Activated CD8-positive, alpha-beta T cell treated with anti-CD3 and anti-CD28 coated beads for 36 hours (primary cell): ENCODE measurements at regions of chr9 and their contacts with region 1.

Region 1: DNA sequence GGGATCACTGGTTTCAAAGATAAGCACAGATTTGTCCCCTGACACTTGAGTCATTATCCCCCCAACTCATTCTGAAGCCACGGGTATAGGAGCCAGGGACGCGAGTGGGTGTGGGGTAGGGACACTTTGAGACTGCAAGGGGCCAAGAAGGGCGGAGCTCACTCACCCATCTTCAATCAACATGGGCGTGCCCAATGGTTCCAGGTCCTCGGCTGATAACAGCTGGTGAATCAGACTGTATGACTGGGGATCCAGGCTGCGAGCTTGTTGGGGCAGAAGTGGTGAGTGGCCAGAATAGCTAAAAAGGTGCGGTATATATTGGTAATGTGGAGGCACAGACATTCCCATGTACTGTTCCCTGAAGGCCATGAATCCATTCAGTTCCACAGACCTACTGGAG is 30.7 kb upstream of the NR5A1 start:
- DNase-seq: no peak
- ATAC-seq: no peak
- H3K4me3 Mint-ChIP-seq: no peak overlapping the region
- H3K27ac Mint-ChIP-seq: no peak overlapping the region
- H3K4me1 Mint-ChIP-seq: no peaks in the 10 kb centered on the region
- H3K27me3 Mint-ChIP-seq: peaks cover 1% of the 10 kb centered on the region
- CTCF ChIP-seq: no peak

Region 2: DNA sequence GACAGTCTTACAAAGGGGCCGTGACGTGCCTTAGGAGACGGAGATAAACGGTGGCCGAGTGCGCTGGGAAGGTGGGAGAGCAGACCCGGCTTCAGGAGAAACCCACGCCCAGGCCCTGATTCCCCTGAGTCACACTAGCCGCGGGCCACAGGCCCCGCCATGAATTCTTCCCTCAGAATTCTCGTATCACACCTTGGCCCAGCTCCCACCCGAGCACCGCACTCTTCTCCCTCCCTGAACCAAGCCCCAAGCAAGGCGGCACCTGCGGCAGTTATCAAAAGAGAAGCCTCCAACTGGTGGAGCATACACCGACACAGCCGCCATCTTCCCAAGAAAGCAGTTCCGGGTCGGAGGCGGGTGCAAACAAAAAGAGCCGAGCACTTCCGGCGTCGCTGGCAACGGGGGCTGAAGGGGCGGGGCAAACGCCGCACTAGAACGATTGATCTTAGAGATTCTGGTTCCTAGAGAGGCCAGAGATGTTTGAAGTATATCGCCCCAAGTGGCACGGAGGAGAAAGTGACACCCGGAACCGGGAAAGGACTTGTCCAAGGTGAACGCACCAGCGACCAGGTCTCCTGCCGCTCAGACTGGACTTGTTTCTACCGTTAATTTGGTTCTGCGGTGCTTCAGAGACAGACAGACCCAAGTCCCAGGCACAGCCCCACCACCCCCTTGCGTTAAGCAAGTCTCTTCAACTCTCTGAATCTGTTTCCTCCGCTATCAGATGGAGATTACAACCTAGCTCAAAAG is 122.6 kb before region 1 on chr9 and contains the start of gene PSMB7:
- CTCF ChIA-PET with region 1: interaction called, 93 read pairs
- POLR2A ChIA-PET with region 1: no interaction called
- intact Hi-C with region 1: loop called (anchors 2 kb)
- DNase-seq: peak; percentile 99
- ATAC-seq: peak; percentile 95
- H3K4me3 Mint-ChIP-seq: peak within 1 kb of the TSS; percentile 94
- H3K27ac Mint-ChIP-seq: peak within 1 kb of the TSS; percentile 96
- H3K4me1 Mint-ChIP-seq: peaks cover 33% of the 10 kb centered on the region
- H3K27me3 Mint-ChIP-seq: no peaks in the 10 kb centered on the region
- CTCF ChIP-seq: peak; percentile 93
- total RNA-seq, gene PSMB7: 155 to 170 TPM

Region 3: GRCh38 chr9:124473310-124473709 is 64.6 kb before region 1 on chr9:
- CTCF ChIA-PET with region 1: interaction called, 11 read pairs
- POLR2A ChIA-PET with region 1: no interaction called
- intact Hi-C with region 1: no loop called
- DNase-seq: no peak
- ATAC-seq: no peak
- H3K4me3 Mint-ChIP-seq: no peak overlapping the region
- H3K27ac Mint-ChIP-seq: no peak overlapping the region
- H3K4me1 Mint-ChIP-seq: no peaks in the 10 kb centered on the region
- H3K27me3 Mint-ChIP-seq: peaks cover 6% of the 10 kb centered on the region
- CTCF ChIP-seq: no peak

Region 4: GRCh38 chr9:124498499-124499146 is 39.3 kb before region 1 on chr9:
- CTCF ChIA-PET with region 1: interaction called, 10 read pairs
- POLR2A ChIA-PET with region 1: no interaction called
- intact Hi-C with region 1: no loop called
- DNase-seq: no peak
- ATAC-seq: no peak
- H3K4me3 Mint-ChIP-seq: no peak overlapping the region
- H3K27ac Mint-ChIP-seq: no peak overlapping the region
- H3K4me1 Mint-ChIP-seq: peaks cover 40% of the 10 kb centered on the region
- H3K27me3 Mint-ChIP-seq: peaks cover 9% of the 10 kb centered on the region
- CTCF ChIP-seq: no peak

Region 5: GRCh38 chr9:124522121-124523098 is 15.5 kb before region 1 on chr9:
- CTCF ChIA-PET with region 1: interaction called, 13 read pairs
- POLR2A ChIA-PET with region 1: no interaction called
- intact Hi-C with region 1: no loop called
- DNase-seq: no peak
- ATAC-seq: no peak
- H3K4me3 Mint-ChIP-seq: no peak overlapping the region
- H3K27ac Mint-ChIP-seq: no peak overlapping the region
- H3K4me1 Mint-ChIP-seq: no peaks in the 10 kb centered on the region
- H3K27me3 Mint-ChIP-seq: peaks cover 4% of the 10 kb centered on the region
- CTCF ChIP-seq: no peak

Region 6: GRCh38 chr9:124551472-124552272 is 13.7 kb after region 1 on chr9:
- CTCF ChIA-PET with region 1: interaction called, 21 read pairs
- POLR2A ChIA-PET with region 1: no interaction called
- intact Hi-C with region 1: no loop called
- DNase-seq: peak; percentile 50
- ATAC-seq: peak; percentile 84
- H3K4me3 Mint-ChIP-seq: no peak overlapping the region
- H3K27ac Mint-ChIP-seq: no peak overlapping the region
- H3K4me1 Mint-ChIP-seq: peaks cover 16% of the 10 kb centered on the region
- H3K27me3 Mint-ChIP-seq: no peaks in the 10 kb centered on the region
- CTCF ChIP-seq: peak; percentile 55